WTC11 (cell line): ENCODE measurements at regions of chr17 and their contacts with region 1.

Region 1: DNA sequence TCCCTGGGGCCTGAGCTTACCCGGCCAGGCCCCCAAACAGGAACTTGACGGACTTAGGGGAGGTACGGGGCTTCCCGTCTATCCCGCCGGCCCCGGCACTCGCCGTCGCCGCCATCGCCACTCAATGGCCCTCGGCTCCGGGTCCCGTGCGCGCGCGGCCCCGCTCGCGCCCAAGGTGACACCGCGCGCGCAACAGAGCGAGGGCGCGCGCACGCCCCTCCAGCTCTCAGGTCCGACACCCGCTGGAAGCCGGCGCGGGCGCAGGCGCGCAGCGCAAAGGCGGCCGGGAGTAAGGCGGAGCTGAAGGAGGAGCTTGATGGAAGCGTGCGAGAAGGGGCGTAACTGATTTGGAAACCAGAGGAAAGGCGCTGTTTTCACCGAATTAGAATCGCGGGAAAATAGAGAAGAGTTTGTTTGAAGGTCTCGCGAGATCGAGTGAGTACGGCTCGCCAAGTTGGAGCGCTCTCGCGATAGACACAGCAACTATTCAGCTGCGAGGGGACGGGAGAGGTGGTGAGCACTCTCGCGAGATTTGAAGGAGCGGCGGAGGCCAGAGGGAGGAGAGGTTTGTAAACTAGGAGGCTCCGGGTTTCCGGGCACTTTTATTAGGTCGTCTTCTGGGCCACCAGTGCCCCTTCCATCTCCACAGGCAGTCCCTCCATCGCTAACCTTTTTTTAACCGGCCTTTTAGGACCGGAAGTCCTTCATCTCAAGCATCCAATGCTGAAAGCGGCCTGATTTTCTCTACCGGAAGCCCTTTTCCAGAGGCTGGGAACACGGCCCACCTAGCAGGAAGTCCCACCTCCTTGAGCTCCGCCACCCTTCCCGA is at the starts of genes RNF167 and SLC25A11:
- DNase-seq: peak; percentile 93
- ATAC-seq: peak; percentile 84
- H3K4me3 Mint-ChIP-seq: peak within 1 kb of the TSS; percentile 96
- H3K27ac Mint-ChIP-seq: peak within 1 kb of the TSS; percentile 98
- H3K4me1 Mint-ChIP-seq: peaks cover 25% of the 10 kb centered on the region
- H3K27me3 Mint-ChIP-seq: no peaks in the 10 kb centered on the region
- CTCF ChIP-seq: no peak
- total RNA-seq, gene RNF167: 121 to 143 TPM (median 122 TPM) in 3 replicates
- total RNA-seq, gene SLC25A11: 73.7 to 83.3 TPM (median 76.8 TPM) in 3 replicates

Region 2: GRCh38 chr17:4956493-4957061 is 16.6 kb after region 1 on chr17:
- CTCF ChIA-PET with region 1: interaction called, 27 read pairs
- POLR2A ChIA-PET with region 1: interaction called, 4 read pairs
- DNase-seq: peak; percentile 83
- ATAC-seq: peak; percentile 64
- H3K4me3 Mint-ChIP-seq: no peak overlapping the region
- H3K27ac Mint-ChIP-seq: no peak overlapping the region
- H3K4me1 Mint-ChIP-seq: peaks cover 35% of the 10 kb centered on the region
- H3K27me3 Mint-ChIP-seq: no peaks in the 10 kb centered on the region
- CTCF ChIP-seq: peak; percentile 53